Lower lobe of right lung (tissue), 2 donors: ENCODE measurements at regions of chr17 and their contacts with region 1.

Region 1: GRCh38 chr17:41792845-41793783 is 6.6 kb upstream of the JUP start:
- DNase-seq: peak; percentile 75
- ATAC-seq: peak; percentile 90 to 94
- H3K4me3 ChIP-seq: no peak overlapping the region
- H3K27ac ChIP-seq: peak overlapping the region; percentile 72
- H3K4me1 ChIP-seq: peaks cover 33% of the 10 kb centered on the region
- H3K27me3 ChIP-seq: no peaks in the 10 kb centered on the region
- CTCF ChIP-seq: no peak

Region 2: DNA sequence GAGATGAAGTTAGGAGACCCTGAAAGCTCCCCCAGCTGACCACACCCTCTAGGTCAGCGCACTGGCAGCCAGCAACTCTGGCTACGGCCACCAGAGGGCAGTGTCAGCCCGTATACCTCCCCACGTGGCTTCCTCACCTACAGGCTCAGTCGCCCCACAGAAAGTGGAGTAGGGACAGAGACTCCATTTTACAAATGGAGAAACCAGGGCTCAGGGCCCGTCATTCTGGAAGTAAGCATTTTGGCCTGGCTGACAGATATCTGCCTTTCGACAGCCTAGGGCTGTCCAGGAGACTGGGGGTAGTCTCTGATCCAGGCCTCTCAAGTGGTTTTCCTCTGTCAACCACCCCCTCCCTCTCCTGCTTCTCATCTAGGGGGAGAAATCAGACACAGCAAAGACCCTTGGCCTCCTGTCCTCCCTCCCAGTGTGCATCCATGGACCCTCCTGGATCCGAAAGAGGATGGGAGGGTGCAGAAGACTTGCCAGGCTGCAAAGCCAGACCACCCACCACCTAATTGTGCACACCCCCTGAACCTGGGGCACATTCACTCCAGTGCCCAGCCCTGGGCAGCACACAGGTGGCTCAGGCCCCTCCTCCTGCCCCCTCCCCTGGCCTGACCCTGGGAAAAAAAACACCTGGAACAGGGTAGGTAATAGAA is 54.9 kb before region 1 on chr17:
- intact Hi-C with region 1: loop called (anchors 10 kb)
- DNase-seq: peak; percentile 85
- ATAC-seq: peak; percentile 91 to 93
- H3K4me3 ChIP-seq: no peak overlapping the region
- H3K27ac ChIP-seq: no peak overlapping the region
- H3K4me1 ChIP-seq: peaks cover 18% of the 10 kb centered on the region
- H3K27me3 ChIP-seq: peaks cover 47% of the 10 kb centered on the region
- CTCF ChIP-seq: peak; percentile 100